AG04449 (cell line): ENCODE measurements at regions of chr4 and their contacts with region 1.

Region 1: DNA sequence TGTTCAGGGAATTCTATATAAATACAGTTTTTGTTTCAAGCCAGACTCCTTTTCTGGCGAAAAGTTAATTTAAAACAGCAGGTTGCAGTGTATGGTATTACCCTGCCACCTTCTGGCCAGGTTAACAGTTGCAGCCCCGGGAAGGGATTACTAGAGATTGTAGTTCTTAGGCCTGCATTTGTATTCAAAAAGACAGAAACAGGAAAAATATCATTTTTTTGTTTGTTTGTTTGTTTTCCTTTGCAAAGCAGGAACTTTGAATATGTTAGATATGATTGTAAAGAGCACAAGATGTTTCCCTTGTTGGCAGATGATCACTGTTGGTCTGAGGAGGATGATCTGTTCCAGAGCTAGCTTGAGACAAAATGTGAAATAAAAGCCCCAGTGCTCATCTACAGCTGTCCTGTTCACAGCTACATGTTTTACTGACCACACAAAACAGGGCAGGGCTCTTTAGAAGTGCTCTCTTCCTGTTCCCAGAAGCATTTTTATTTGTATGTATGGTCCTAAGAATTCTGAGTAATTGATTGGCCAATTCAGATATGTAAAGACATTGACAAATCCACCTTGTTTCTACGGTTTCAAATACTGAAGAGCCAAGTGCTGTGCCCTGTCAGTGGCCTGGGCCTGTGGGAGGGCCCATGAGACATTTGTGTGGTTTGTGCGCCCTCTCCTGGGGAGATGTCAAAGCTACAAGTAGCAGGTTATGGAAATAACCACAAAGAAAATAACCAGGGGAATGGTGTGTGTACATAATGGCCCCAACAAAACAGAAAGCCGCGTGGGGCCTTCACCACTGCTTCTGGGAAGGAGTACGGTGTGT is 57.9 kb downstream of the CLDN22 start:
- DNase-seq: peak; percentile 29
- H3K4me3 ChIP-seq: no peak overlapping the region
- CTCF ChIP-seq: peak; percentile 70

Region 2: GRCh38 chr4:182938205-182938645 is 323.9 kb before region 1 on chr4:
- CTCF ChIA-PET with region 1: interaction called, 313 read pairs
- POLR2A ChIA-PET with region 1: no interaction called
- DNase-seq: no peak
- H3K4me3 ChIP-seq: no peak overlapping the region
- CTCF ChIP-seq: peak; percentile 95

Region 3: GRCh38 chr4:183098723-183099536 is 163.2 kb before region 1 on chr4 and contains the start of gene WWC2:
- CTCF ChIA-PET with region 1: interaction called, 31 read pairs
- POLR2A ChIA-PET with region 1: no interaction called
- DNase-seq: peak; percentile 41
- H3K4me3 ChIP-seq: peak within 1 kb of the TSS; percentile 94
- CTCF ChIP-seq: peak; percentile 7

Region 4: DNA sequence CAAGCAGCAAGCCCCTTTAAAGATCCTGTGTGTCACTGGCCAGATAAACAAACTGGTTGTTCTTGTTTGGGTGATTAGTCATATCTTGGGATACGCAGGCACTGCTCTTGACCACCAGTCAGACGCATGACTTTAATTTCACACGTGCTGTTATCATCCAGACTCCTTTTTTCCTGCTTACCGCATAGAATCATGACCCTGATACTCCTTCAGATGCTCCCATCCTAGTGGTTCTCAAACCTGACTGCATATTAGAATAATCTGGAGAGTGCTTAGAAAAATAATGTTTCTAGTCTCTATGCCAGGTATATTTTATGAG is 20.9 kb before region 1 on chr4:
- CTCF ChIA-PET with region 1: interaction called, 51 read pairs
- POLR2A ChIA-PET with region 1: no interaction called
- DNase-seq: peak; percentile 26
- H3K4me3 ChIP-seq: no peak overlapping the region
- CTCF ChIP-seq: no peak

Region 5: DNA sequence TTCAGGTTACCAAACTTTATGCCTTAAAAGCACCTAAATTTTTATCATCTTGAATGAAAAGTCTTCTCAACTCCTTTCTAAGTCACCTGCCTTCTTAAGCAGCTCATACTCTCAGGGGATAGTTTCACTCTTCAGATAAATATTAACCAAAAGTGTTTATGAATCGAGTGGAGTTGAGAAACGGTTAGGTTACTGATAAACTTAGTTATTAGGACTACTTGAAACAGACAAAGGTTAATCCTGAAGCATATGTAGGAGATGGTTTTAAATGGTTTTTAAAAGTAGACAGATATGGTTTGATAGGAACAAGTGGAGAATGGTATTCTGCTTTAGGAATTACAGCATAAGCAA is 25.1 kb after region 1 on chr4:
- CTCF ChIA-PET with region 1: interaction called, 26 read pairs
- POLR2A ChIA-PET with region 1: no interaction called
- DNase-seq: no peak
- H3K4me3 ChIP-seq: no peak overlapping the region
- CTCF ChIP-seq: no peak

Region 6: DNA sequence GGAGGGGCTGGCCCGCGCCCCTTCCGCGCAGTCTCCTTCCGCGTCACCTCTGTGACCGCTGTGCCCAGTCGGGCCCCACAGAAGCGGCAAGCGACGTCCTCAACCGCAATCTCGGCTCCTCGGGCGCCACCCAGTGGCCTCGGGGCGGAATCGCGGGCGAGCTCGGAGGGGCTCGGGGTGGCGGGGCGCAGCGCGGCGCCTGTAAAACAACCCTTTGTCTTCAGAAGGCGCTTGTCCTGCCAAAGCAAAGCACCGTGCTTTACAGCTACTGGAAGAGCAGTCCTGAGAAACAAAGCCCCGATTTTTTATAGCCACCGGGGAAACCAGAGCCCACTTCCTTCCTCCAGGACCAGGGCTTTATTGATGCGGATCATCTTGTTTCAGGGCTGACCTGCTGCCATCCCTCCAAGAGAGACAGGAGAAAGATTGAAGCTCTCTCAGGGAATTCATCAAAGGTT is 145.0 kb after region 1 on chr4:
- CTCF ChIA-PET with region 1: interaction called, 24 read pairs
- POLR2A ChIA-PET with region 1: no interaction called
- DNase-seq: no peak
- H3K4me3 ChIP-seq: peak overlapping the region; percentile 63
- CTCF ChIP-seq: peak; percentile 95